Gastrocnemius medialis (tissue), 4 donors: ENCODE measurements at regions of chr2 and their contacts with region 1.

Region 1: DNA sequence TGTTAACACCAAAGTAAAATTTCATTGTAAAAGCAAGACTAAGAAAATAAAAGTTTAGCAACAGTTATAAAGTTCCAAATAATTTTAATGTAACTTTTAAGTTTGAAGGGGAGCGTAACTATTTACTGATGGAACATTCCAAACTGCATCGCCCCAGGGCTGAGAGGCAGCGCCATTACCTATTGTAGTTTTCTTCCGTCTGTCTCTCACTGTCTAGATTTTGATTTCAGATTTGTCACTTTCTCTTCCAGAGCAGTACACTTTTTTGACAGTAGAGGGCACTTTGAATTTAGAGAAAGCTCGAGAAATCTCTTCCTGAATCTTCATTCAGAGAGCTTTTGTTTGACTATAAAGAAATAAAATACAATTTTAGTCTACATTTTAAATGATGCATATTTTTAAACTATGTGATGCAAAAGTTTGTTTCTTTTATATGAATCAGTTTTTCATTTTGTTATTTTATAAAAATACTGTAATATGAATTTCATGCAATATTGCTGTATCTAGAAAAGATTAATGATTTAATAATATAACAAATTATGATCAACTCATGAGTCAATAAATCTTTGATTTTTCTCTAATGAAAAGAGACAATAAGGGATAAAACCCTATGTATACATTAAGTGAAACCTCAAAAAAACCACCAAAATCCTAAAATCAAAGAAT is 389.8 kb downstream of the FIGN start:
- DNase-seq: no peak
- ATAC-seq: no peak
- H3K4me3 ChIP-seq: no peak overlapping the region
- H3K27ac ChIP-seq: no peak overlapping the region
- H3K4me1 ChIP-seq: peaks cover 5 to 7% of the 10 kb centered on the region in 2 donors
- H3K27me3 ChIP-seq: no peaks in the 10 kb centered on the region
- CTCF ChIP-seq: peak; percentile 42 to 73 (median 65)
- POLR2A ChIP-seq: no peak

Region 2: DNA sequence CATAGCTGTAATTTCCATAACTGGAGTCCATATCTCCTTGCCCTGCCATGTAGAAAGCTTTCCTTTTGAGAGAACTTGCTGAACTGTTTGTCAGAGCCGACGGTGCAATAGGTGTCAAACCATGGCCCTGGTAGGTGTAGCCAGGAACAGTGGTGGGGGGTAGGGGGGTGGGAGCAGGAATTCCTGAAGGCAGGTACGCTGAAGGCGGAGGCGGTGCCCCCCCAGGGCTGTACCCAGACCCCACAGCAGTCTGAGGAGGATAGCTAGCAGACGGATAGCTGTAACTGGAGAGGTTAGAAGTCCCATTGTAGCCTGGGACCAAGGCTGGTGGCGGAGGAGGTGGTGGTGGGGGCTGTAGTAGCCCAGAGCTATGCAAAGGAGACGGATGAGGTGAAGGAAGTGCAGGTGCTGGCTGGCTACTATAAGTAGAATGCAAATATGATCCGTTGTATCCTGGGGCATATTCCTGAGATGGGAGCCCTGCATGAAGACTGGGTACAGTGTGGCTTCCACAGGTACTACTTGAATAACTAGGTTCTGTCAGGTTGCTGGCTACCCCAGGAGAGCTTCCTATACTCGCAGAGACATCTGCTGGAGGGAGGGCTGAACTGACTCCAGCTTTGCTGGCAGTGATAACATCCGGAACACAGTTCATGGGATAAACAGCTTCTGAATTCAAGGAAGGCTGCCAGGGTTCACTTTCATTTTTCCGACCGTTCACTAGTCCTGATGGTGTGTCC is 264.9 kb after region 1 on chr2:
- in situ Hi-C with region 1: no loop called
- intact Hi-C with region 1: loop called (anchors 10 kb)
- DNase-seq: no peak
- ATAC-seq: no peak
- H3K4me3 ChIP-seq: no peak overlapping the region
- H3K27ac ChIP-seq: no peak overlapping the region
- H3K4me1 ChIP-seq: no peaks in the 10 kb centered on the region
- H3K27me3 ChIP-seq: no peaks in the 10 kb centered on the region
- CTCF ChIP-seq: no peak
- POLR2A ChIP-seq: no peak

Region 3: DNA sequence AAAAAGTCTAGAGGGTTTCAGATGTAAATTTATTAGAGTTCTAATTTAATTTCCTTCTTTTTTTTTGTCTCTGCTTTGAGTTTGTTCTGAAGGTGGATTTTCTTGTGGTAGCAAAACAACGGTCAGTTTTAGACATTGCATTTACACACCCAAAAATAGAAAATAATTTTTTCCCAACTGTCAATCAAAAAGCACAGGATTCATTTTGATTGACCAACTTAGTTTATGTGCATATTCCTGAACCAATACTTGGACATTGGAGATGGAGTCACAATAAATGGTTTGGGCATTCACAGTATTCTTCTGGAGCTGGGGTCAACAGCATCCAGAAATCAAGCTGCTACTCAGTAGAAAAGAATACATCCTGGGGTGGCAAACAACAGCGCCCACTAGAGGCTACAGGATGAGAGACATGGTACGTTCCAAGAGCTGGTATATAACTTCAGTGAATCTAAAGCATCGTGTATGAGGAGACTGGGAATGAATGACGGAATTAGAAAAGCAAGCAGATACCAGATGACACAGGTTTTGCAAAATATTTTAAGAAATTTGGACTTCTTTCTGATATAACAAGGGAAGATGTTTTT is 532.6 kb after region 1 on chr2:
- in situ Hi-C with region 1: no loop called
- intact Hi-C with region 1: loop called (anchors 5 kb)
- DNase-seq: no peak
- ATAC-seq: no peak
- H3K4me3 ChIP-seq: no peak overlapping the region
- H3K27ac ChIP-seq: no peak overlapping the region
- H3K4me1 ChIP-seq: peaks cover 0 to 4% of the 10 kb centered on the region in 2 donors
- H3K27me3 ChIP-seq: no peaks in the 10 kb centered on the region
- CTCF ChIP-seq: peak in 1 of 5 experiments; percentile 36
- POLR2A ChIP-seq: no peak

Region 4: DNA sequence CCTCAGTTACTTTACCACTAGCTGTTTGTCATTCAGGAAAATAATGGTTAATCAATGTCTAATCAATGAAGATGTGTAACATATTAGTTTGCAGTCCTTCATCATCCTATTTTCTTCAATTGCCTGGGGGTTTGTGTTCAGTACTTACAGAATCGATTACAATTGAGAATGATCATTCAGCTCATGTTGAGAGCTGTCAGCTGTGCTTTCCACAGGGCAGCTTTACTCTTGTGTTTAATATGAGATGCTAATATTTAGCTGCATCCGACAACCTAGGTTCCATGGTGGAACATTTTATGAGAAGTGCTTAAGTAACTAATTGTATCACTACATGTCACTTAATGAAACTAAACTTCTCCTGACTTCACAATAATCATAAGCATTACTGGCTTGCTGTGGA is 1083.3 kb after region 1 on chr2:
- in situ Hi-C with region 1: no loop called
- intact Hi-C with region 1: loop called (anchors 5 kb)
- DNase-seq: no peak
- ATAC-seq: no peak
- H3K4me3 ChIP-seq: no peak overlapping the region
- H3K27ac ChIP-seq: no peak overlapping the region
- H3K4me1 ChIP-seq: no peaks in the 10 kb centered on the region
- H3K27me3 ChIP-seq: no peaks in the 10 kb centered on the region
- CTCF ChIP-seq: no peak
- POLR2A ChIP-seq: no peak